Activated CD4-positive, alpha-beta memory T cell treated with anti-CD3 and anti-CD28 coated beads for 36 hours (primary cell): ENCODE measurements at regions of chr10 and their contacts with region 1.

Region 1: DNA sequence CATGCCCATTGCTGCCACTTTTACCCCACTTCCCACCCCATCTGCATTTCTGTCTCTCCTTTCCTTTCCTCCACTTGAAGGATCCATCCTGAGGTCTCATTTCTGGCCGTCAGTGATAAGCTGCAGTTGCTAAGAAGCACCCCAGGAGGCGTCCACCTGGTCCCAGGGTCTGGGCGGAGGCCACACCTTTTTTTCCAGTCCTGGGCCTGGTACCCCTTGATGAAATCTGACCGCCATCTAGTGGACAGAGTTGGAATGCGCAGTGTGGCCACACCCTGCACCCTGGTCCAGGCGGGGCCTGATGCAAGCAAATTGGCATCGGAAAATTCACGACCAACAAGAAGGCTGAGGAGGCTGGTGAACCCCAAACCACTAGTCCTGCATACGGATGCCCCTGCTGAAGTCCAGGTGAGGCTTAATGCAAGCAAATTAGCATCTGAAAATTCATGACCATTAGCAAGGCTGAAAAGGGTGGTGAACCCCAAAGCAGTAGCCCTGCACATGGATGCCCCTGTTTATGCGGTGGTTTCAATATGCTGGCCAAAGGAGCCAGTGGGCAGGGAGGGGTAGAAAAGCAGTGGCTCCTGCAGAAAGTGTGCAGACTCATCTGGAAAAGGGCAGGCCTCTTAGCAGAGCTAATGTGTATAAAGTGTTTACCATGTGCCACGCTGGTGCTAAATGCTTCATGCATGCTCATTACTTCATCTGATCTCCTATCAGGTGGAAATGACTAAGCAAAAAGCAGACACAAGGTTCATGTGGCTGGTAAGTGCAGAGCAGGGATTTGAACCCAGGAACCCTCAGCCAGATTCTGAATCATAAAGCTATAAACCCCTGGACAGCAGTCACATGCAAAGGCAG is 43.2 kb downstream of the GPAM start:
- DNase-seq: peak; percentile 86
- H3K4me3 Mint-ChIP-seq: no peak overlapping the region
- H3K27ac Mint-ChIP-seq: no peak overlapping the region
- H3K4me1 Mint-ChIP-seq: no peaks in the 10 kb centered on the region
- H3K27me3 Mint-ChIP-seq: no peaks in the 10 kb centered on the region

Region 2: GRCh38 chr10:111076191-111076681 is 1064.1 kb before region 1 on chr10:
- CTCF ChIA-PET with region 1: interaction called, 3 read pairs
- POLR2A ChIA-PET with region 1: no interaction called
- intact Hi-C with region 1: loop called (anchors 10 kb)
- DNase-seq: peak; percentile 70
- H3K4me3 Mint-ChIP-seq: peak overlapping the region; percentile 65
- H3K27ac Mint-ChIP-seq: no peak overlapping the region
- H3K4me1 Mint-ChIP-seq: peaks cover 11% of the 10 kb centered on the region
- H3K27me3 Mint-ChIP-seq: peaks cover 56% of the 10 kb centered on the region

Region 3: DNA sequence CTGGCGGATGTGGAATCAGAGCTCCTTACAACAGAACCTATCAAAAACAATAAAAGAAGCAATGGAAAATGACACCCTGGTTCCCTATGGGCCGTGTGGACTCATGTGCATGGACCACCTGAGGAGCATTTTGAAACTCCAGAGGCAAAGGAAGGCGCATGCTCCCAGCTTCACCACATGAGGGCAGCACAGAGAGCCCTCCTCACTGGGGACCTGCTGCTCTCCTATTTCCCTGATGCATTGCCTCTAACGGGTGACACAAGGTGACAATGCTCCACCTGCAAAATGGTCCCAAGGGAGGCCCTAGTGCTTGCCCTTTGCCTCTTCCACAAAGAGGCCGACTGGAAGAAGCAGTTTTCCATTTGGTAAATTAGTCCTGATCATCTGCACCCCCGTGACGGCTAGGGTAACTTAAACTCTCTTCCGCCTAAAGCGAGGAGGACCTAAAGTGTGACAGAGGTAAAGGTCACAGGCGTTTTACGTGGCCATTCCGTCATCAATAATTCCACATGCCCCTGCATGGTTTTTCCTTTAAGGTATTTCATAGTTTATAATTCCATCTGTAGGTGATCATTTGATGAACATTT is 24.4 kb before region 1 on chr10:
- CTCF ChIA-PET with region 1: interaction called, 66 read pairs
- POLR2A ChIA-PET with region 1: no interaction called
- intact Hi-C with region 1: no loop called
- DNase-seq: peak; percentile 58
- H3K4me3 Mint-ChIP-seq: no peak overlapping the region
- H3K27ac Mint-ChIP-seq: no peak overlapping the region
- H3K4me1 Mint-ChIP-seq: no peaks in the 10 kb centered on the region
- H3K27me3 Mint-ChIP-seq: no peaks in the 10 kb centered on the region

Region 4: DNA sequence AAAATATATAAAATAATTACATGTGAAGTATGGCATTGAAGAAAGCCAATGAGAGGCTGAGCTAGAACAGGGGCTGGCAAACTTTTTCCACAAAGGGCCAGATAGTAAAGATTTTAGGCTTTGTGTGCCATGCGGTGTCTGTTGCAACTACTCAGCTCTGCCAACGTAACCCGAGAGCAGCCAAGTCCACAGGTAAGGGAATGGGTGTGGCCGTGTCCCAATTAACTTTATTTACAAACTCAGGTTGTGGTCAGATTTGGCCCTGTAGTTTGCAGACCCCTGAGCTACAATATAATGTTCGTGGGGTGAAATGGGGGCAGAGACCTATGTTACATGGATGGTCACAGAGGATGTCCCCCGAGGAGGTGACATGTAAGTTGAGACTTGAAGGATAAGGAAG is 10.4 kb before region 1 on chr10:
- CTCF ChIA-PET with region 1: interaction called, 33 read pairs
- POLR2A ChIA-PET with region 1: no interaction called
- intact Hi-C with region 1: no loop called
- DNase-seq: no peak
- H3K4me3 Mint-ChIP-seq: no peak overlapping the region
- H3K27ac Mint-ChIP-seq: no peak overlapping the region
- H3K4me1 Mint-ChIP-seq: no peaks in the 10 kb centered on the region
- H3K27me3 Mint-ChIP-seq: no peaks in the 10 kb centered on the region

Region 5: GRCh38 chr10:112160834-112161233 is 20.5 kb after region 1 on chr10:
- CTCF ChIA-PET with region 1: interaction called, 13 read pairs
- POLR2A ChIA-PET with region 1: no interaction called
- intact Hi-C with region 1: no loop called
- DNase-seq: no peak
- H3K4me3 Mint-ChIP-seq: no peak overlapping the region
- H3K27ac Mint-ChIP-seq: no peak overlapping the region
- H3K4me1 Mint-ChIP-seq: no peaks in the 10 kb centered on the region
- H3K27me3 Mint-ChIP-seq: no peaks in the 10 kb centered on the region

Region 6: GRCh38 chr10:112434988-112435619 is 294.8 kb after region 1 on chr10:
- CTCF ChIA-PET with region 1: interaction called, 12 read pairs
- POLR2A ChIA-PET with region 1: no interaction called
- intact Hi-C with region 1: no loop called
- DNase-seq: no peak
- H3K4me3 Mint-ChIP-seq: no peak overlapping the region
- H3K27ac Mint-ChIP-seq: no peak overlapping the region
- H3K4me1 Mint-ChIP-seq: no peaks in the 10 kb centered on the region
- H3K27me3 Mint-ChIP-seq: no peaks in the 10 kb centered on the region